Heart right ventricle (tissue), 16 donors: ENCODE measurements at regions of chr7 and their contacts with region 1.

Region 1: GRCh38 chr7:51617686-51618085 is 301.1 kb upstream of the COBL start:
- DNase-seq: no peak
- ATAC-seq: no peak
- H3K4me3 ChIP-seq: no peak overlapping the region
- H3K27ac ChIP-seq: no peak overlapping the region
- H3K4me1 ChIP-seq: peaks cover 0 to 10% (median 0%) of the 10 kb centered on the region in 9 donors
- H3K27me3 ChIP-seq: no peaks in the 10 kb centered on the region
- CTCF ChIP-seq: no peak

Region 2: DNA sequence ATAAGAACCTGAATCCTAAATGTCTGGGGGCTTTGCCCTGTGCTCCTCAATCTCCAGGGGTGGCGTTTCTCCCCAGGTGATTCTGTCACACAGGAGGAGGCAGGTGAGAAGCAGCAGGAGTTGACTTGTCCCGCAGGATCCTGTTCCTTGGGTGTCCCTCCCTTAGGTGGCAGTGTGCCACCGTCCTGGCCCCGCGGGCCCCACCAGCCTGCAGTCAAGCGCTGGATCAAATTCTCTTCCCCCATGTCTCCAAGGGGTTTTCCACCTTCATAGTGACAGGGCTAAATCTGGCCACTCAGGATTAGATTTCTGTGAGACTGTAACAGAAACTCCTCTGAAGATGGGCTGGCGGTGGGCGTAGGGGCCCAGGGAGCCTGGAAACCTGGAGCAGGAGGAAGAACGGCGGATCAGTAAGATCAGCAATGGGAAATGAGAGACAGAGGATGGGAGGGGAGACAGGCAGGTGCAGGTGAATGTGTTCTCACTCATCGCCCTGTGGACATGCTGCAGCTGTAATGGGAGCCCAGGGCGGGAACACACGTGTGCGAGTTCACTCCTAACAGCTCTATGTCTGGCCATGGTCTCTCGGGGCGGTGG is 28.1 kb after region 1 on chr7:
- intact Hi-C with region 1: loop called in 1 of 10 experiments (anchors 1 kb)
- DNase-seq: no peak
- ATAC-seq: no peak
- H3K4me3 ChIP-seq: no peak overlapping the region
- H3K27ac ChIP-seq: no peak overlapping the region
- H3K4me1 ChIP-seq: peaks cover 0 to 7% (median 0%) of the 10 kb centered on the region in 9 donors
- H3K27me3 ChIP-seq: no peaks in the 10 kb centered on the region
- CTCF ChIP-seq: no peak

Region 3: DNA sequence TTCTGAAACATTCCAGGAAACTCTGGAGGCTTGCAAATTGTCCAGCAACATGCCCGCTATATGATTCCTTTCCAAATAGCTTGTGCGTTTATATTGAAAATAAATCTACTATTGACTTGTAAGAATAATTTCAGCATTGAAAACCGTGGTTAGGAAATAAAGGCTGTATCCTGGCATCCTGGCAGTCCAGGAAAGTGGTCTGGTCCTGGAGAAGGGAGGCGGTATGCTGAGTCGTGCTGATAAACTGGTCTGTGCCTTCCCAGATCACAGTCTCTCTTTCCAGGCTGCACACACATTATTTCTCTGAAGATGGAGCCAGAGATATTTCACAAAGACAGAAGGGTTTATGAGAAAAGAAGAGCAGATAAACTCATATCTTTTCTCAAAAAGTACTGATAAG is 49.1 kb after region 1 on chr7:
- intact Hi-C with region 1: no loop called
- DNase-seq: no peak
- ATAC-seq: no peak
- H3K4me3 ChIP-seq: no peak overlapping the region
- H3K27ac ChIP-seq: no peak overlapping the region
- H3K4me1 ChIP-seq: no peaks in the 10 kb centered on the region
- H3K27me3 ChIP-seq: peaks cover 0 to 10% (median 0%) of the 10 kb centered on the region in 7 donors
- CTCF ChIP-seq: no peak